Breast epithelium (tissue), 4 donors: ENCODE measurements at regions of chr10 and their contacts with region 1.

Region 1: DNA sequence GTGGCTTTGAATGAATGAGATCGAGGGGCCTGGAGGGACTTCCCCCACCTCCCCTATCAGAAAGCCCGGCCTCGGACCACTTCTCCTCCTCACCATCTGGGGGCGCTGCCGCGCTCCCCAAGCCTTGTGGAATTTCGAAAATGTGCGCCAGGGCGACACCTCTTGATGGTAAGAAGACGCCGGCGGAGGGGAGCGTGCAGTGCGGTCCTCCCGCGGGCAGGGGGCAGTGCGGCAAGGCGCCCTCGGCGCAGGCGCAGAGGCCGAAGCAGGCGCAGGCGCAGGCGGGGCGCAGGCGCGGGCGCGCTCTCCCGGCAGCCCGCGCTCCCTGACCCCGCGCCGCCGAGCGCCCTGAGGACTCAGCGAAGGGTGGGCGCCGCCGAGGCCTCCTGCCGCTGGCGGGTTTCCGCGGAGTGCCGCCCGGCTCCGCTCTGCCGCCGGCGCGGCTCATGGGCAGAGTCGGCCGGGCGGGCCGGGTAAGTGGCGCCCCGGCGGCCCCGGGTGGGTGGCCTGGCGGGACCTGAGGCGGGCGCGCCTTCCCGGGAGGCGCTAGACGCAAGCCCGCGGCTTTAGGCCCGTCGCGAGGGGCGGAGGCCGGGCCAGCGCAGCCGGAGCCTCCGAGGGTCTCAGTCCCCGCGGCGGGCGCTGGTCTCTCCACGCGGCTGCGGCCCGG is at the start of gene RBM17:
- DNase-seq: peak; percentile 95
- H3K4me3 ChIP-seq: peak within 1 kb of the TSS; percentile 86 to 98 (median 97)
- H3K27ac ChIP-seq: peak within 1 kb of the TSS; percentile 91 to 94
- H3K4me1 ChIP-seq: peaks cover 0 to 3% of the 10 kb centered on the region in 2 donors
- H3K27me3 ChIP-seq: no peaks in the 10 kb centered on the region
- CTCF ChIP-seq: peak; percentile 98 to 100 (median 100)
- POLR2A ChIP-seq: no peak
- total RNA-seq, gene RBM17: 62.4 to 72.4 (median 68.2) TPM

Region 2: DNA sequence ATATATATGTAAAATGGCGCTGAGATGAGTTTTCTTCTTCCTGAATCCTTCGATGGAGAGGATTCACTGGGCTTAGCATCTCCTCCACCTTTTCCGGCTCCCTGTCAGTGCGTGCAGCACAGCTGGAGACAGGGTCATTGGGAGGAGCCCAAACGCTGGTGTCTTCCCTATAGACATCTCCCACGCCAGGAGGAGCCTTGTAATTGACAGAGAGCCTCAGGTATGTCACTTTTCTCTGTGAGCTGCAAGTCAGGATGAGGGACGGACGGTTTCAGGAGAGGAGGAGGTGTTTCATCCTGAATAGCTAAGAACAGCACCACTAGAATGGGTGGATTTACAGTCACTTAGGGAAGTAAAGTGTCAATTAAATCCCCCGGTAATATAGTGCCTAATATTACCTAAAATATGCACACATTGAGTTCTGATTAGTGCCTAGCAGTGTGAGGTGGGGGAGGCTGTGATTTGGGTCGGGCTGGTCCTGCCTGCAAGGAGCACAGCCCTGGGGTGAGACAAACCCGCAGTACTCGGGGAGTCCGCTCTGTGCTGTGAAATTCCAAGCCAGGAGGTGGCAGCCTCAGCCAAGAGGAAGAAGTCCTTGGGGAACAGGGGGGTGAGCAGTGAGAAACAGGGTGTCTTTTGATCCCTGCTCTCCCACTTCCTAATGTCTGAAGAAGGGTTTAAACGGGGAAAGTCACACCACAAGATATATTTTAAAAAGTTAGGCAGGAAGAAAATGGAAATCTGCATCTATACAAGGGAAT is 139.7 kb before region 1 on chr10:
- intact Hi-C with region 1: loop called (anchors 10 kb)
- DNase-seq: peak in 1 of 2 donors; percentile 63
- H3K4me3 ChIP-seq: no peak overlapping the region
- H3K27ac ChIP-seq: peak overlapping the region; percentile 87 to 91
- H3K4me1 ChIP-seq: peaks cover 9 to 13% of the 10 kb centered on the region in 2 donors
- H3K27me3 ChIP-seq: no peaks in the 10 kb centered on the region
- CTCF ChIP-seq: peak in 2 of 3 donors; percentile 36 to 42
- POLR2A ChIP-seq: no peak